ENCODE measurements at regions of chr12 and their contacts with region 1.

Region 1: GRCh38 chr12:82326905-82327503 is 31.2 kb downstream of the CCDC59 start:
- DNase-seq: peak in 3 of 14 experiments; percentile 3 to 25 (median 17)
- ATAC-seq: no peak
- H3K4me3 ChIP-seq: no peak overlapping the region
- H3K4me3 Mint-ChIP-seq: no peak overlapping the region
- H3K27ac ChIP-seq: no peak overlapping the region
- H3K27ac Mint-ChIP-seq: no peak overlapping the region
- H3K4me1 ChIP-seq: no peaks in the 10 kb centered on the region
- H3K4me1 Mint-ChIP-seq: no peaks in the 10 kb centered on the region
- H3K27me3 ChIP-seq: no peaks in the 10 kb centered on the region
- H3K27me3 Mint-ChIP-seq: peaks cover 5% of the 10 kb centered on the region
- CTCF ChIP-seq: peak; percentile 60

Region 2: GRCh38 chr12:82216475-82216874 is 110.5 kb before region 1 on chr12:
- CTCF ChIA-PET with region 1: no interaction called
- POLR2A ChIA-PET with region 1: no interaction called
- intact Hi-C with region 1: no loop called
- DNase-seq: no peak
- ATAC-seq: no peak
- H3K4me3 ChIP-seq: no peak overlapping the region
- H3K4me3 Mint-ChIP-seq: no peak overlapping the region
- H3K27ac ChIP-seq: no peak overlapping the region
- H3K27ac Mint-ChIP-seq: no peak overlapping the region
- H3K4me1 ChIP-seq: no peaks in the 10 kb centered on the region
- H3K4me1 Mint-ChIP-seq: no peaks in the 10 kb centered on the region
- H3K27me3 ChIP-seq: no peaks in the 10 kb centered on the region
- H3K27me3 Mint-ChIP-seq: no peaks in the 10 kb centered on the region
- CTCF ChIP-seq: no peak

Region 3: GRCh38 chr12:82279539-82280058 is 47.4 kb before region 1 on chr12:
- CTCF ChIA-PET with region 1: no interaction called
- POLR2A ChIA-PET with region 1: no interaction called
- intact Hi-C with region 1: no loop called
- DNase-seq: no peak
- ATAC-seq: no peak
- H3K4me3 ChIP-seq: no peak overlapping the region
- H3K4me3 Mint-ChIP-seq: no peak overlapping the region
- H3K27ac ChIP-seq: no peak overlapping the region
- H3K27ac Mint-ChIP-seq: no peak overlapping the region
- H3K4me1 ChIP-seq: no peaks in the 10 kb centered on the region
- H3K4me1 Mint-ChIP-seq: no peaks in the 10 kb centered on the region
- H3K27me3 ChIP-seq: no peaks in the 10 kb centered on the region
- H3K27me3 Mint-ChIP-seq: no peaks in the 10 kb centered on the region
- CTCF ChIP-seq: no peak

Region 4: DNA sequence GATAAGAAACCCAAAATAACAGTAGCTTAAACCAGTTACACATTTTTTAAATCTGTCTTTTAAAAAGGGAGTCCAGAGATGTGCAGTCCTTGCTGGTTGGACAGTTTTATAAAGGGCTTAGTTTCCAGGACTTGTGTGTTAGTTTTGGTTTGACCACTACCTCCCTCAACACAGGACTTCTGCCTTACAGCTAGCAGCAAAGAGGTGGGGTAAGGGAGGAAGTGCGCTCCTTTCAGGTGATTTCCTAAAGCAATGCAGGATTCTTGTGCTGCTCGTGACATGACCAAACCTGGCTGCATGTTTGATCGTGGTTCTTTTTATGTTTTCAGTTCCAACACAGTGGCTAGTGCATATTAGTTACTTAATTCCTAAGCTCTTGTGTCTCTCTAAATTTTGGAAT is 625.9 kb after region 1 on chr12:
- CTCF ChIA-PET with region 1: no interaction called
- POLR2A ChIA-PET with region 1: no interaction called
- intact Hi-C with region 1: no loop called
- DNase-seq: no peak
- ATAC-seq: no peak
- H3K4me3 ChIP-seq: no peak overlapping the region
- H3K4me3 Mint-ChIP-seq: no peak overlapping the region
- H3K27ac ChIP-seq: no peak overlapping the region
- H3K27ac Mint-ChIP-seq: no peak overlapping the region
- H3K4me1 ChIP-seq: no peaks in the 10 kb centered on the region
- H3K4me1 Mint-ChIP-seq: no peaks in the 10 kb centered on the region
- H3K27me3 ChIP-seq: no peaks in the 10 kb centered on the region
- H3K27me3 Mint-ChIP-seq: no peaks in the 10 kb centered on the region
- CTCF ChIP-seq: no peak

Region 5: DNA sequence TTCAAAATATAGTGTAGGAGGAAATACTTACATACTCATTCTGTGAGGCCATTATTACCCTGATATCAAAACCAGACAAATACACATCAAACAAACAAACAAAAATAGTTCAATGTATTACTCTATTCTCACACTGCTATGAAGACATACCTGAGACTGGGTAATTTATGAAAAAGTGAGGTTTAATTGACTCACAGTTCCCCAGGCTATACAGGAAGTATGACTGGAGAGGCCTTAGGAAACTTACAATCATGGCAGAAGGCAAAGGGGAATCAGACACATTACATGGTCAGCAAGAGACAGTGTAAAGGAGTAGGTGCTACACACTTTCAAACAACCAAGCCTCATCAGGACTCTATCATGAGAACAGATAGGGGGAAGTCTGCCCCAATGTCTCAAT is 1382.9 kb after region 1 on chr12:
- CTCF ChIA-PET with region 1: no interaction called
- POLR2A ChIA-PET with region 1: no interaction called
- intact Hi-C with region 1: loop called in 1 of 2 experiments (anchors 10 kb)
- DNase-seq: no peak
- ATAC-seq: no peak
- H3K4me3 ChIP-seq: no peak overlapping the region
- H3K4me3 Mint-ChIP-seq: no peak overlapping the region
- H3K27ac ChIP-seq: no peak overlapping the region
- H3K27ac Mint-ChIP-seq: no peak overlapping the region
- H3K4me1 ChIP-seq: no peaks in the 10 kb centered on the region
- H3K4me1 Mint-ChIP-seq: no peaks in the 10 kb centered on the region
- H3K27me3 ChIP-seq: no peaks in the 10 kb centered on the region
- H3K27me3 Mint-ChIP-seq: no peaks in the 10 kb centered on the region
- CTCF ChIP-seq: no peak

Measured in CD4-positive, alpha-beta T cell (primary cell).